Heart right ventricle (tissue), 16 donors: ENCODE measurements at regions of chrX and their contacts with region 1.

Region 1: DNA sequence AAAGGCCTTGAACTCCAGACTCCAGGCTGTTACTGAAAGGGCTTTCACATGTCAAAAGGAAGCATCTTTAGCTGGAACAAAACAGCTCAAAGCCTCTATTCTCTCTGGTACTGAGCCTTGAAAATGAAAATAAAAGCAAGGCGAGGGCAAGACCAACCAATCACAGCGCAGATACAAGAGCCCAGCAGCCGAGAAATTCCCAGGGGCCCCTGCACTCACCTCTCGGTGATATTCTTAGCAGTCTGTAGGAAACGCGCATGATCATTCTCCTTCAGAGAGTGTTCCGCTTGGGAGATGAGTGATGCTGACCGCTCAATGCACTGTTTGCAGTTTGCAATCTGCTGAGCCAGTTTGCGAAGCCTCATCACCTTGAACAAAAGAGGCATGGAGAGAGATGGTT is 138.1 kb downstream of the MID1 start:
- DNase-seq: peak; percentile 32 to 64
- ATAC-seq: peak in 7 of 8 donors; percentile 47 to 89 (median 78)
- H3K4me3 ChIP-seq: peak overlapping the region in 5 of 10 donors; percentile 3 to 36 (median 22)
- H3K27ac ChIP-seq: peak overlapping the region; percentile 50 to 92 (median 80)
- H3K4me1 ChIP-seq: peaks cover 0 to 51% (median 30%) of the 10 kb centered on the region in 9 donors
- H3K27me3 ChIP-seq: no peaks in the 10 kb centered on the region
- CTCF ChIP-seq: no peak

Region 2: DNA sequence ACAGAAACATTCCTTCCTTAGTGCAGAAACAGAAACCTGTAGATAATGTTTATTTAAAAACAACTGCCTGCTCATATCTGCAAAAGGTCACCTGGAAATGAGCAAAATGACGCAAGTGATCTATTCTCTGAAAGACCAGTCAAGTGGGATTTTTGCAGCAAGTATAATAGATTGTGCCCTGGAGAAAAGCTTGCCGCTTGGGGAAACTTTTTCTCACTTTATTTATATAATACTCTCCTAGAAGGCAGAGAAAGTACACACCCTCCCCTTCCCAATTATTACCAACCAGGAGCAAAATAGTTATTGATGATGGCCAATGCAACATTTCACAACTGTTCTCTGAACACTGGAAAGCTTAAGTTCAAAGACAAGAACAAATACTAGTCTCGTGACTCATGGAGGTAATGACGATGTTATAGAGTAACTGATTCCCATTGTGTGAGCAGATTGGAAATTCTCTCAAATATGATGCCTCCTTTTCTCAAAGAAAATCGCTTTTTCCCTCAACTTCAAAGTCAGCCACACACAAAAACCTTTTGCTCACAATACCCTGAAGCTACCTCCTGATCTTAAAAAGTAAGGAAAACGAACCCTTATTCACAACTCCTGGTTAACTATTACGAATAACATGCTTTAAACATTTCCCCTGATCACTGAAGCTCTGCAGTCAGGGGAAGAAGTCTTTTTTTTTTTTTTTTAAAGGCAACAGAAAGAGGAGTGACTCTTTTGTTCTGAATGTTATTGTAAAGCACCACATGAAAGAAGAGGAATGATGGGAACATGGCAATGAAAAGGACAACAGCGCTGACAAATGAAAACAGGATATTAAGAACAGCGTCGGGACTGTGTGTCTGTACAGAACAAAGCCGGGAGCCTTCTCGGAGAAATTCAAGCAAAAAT is 97.1 kb after region 1 on chrX:
- intact Hi-C with region 1: loop called in 2 of 10 experiments (anchors 5 to 10 kb)
- DNase-seq: no peak
- ATAC-seq: peak in 2 of 8 donors; percentile 29 to 47
- H3K4me3 ChIP-seq: peak overlapping the region in 2 of 10 donors; percentile 13 to 22
- H3K27ac ChIP-seq: peak overlapping the region in 7 of 10 donors; percentile 1 to 82 (median 51)
- H3K4me1 ChIP-seq: peaks cover 0 to 31% (median 5%) of the 10 kb centered on the region in 9 donors
- H3K27me3 ChIP-seq: no peaks in the 10 kb centered on the region
- CTCF ChIP-seq: no peak

Region 3: DNA sequence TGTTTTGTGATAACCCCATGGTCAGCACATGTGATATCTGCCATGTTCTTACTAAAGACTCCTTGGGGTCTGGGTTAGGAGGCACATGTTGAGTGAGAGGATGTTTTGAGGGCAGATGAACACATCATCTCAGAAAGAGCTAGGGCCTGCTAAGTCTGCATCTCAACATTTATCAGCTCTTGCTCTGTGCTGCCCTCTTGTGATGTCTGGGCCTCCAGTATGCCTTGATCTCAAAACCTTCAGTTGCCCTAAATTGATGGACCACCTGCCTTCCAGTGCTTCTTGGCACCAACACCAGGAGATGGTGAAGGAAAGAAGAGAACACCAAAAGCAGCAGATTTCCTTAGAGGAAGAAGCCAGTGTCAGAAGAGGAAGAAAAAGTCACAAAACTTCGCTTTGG is 115.6 kb after region 1 on chrX:
- intact Hi-C with region 1: loop called in 1 of 10 experiments (anchors 5 kb)
- DNase-seq: no peak
- ATAC-seq: peak in 4 of 8 donors; percentile 45 to 60 (median 48)
- H3K4me3 ChIP-seq: no peak overlapping the region
- H3K27ac ChIP-seq: peak overlapping the region in 5 of 10 donors; percentile 39 to 53 (median 48)
- H3K4me1 ChIP-seq: peaks cover 0 to 10% (median 0%) of the 10 kb centered on the region in 9 donors
- H3K27me3 ChIP-seq: no peaks in the 10 kb centered on the region
- CTCF ChIP-seq: peak in 8 of 9 donors; percentile 8 to 58 (median 45)